T-cell (primary cell): ENCODE measurements at regions of chr3 and their contacts with region 1.

Region 1: DNA sequence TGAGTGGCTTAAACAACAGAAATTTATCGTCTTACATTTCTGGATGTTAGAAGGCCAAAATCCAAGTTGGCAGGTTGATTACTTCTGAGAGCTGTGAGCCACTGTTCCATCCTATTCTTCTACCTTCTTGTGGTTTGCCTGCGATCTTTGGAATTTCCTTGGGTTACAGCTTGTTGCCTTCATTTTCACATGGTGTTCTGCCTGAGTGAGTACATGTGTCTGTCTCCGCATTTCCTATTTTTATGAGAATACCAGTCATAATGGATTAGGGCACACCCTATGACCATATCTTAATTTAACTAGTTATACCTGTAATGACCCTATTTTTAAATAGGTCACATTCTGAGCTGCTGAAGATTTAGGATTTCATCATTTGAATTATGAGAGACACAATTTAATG is 294.3 kb downstream of the CNTN4 start:
- DNase-seq: no peak
- ATAC-seq: no peak
- H3K4me3 ChIP-seq: no peak overlapping the region
- H3K4me3 Mint-ChIP-seq: no peak overlapping the region
- H3K27ac ChIP-seq: no peak overlapping the region
- H3K27ac Mint-ChIP-seq: no peak overlapping the region
- H3K4me1 ChIP-seq: no peaks in the 10 kb centered on the region
- H3K4me1 Mint-ChIP-seq: no peaks in the 10 kb centered on the region
- H3K27me3 ChIP-seq: no peaks in the 10 kb centered on the region
- H3K27me3 Mint-ChIP-seq: peaks cover 0 to 1% of the 10 kb centered on the region in 2 donors

Region 2: GRCh38 chr3:2423143-2423542 is 30.2 kb after region 1 on chr3:
- CTCF ChIA-PET with region 1: no interaction called
- POLR2A ChIA-PET with region 1: interaction called in 1 of 2 experiments, 10 read pairs
- DNase-seq: no peak
- ATAC-seq: no peak
- H3K4me3 ChIP-seq: no peak overlapping the region
- H3K4me3 Mint-ChIP-seq: no peak overlapping the region
- H3K27ac ChIP-seq: no peak overlapping the region
- H3K27ac Mint-ChIP-seq: no peak overlapping the region
- H3K4me1 ChIP-seq: no peaks in the 10 kb centered on the region
- H3K4me1 Mint-ChIP-seq: no peaks in the 10 kb centered on the region
- H3K27me3 ChIP-seq: no peaks in the 10 kb centered on the region
- H3K27me3 Mint-ChIP-seq: no peaks in the 10 kb centered on the region

Region 3: DNA sequence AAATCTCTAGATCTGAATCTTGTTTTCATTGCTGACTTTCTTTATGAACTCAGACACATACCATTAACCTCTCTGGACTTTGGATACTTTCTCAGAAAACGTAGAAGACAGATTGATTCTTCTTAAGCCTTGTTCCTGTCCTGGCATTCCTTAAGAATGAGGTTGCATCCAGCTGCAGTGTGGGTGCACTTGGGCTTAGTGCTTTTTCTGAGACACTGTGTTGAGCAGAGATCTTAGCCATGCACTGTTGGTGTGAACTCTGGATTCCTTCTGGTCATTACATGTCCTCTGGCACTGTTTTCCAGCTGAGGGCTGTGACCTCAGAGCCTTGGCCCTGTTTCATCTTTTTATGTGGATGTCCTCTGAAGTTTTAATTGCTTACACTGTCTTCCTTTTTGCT is 133.9 kb after region 1 on chr3:
- CTCF ChIA-PET with region 1: no interaction called
- POLR2A ChIA-PET with region 1: no interaction called
- DNase-seq: no peak
- ATAC-seq: no peak
- H3K4me3 ChIP-seq: no peak overlapping the region
- H3K4me3 Mint-ChIP-seq: no peak overlapping the region
- H3K27ac ChIP-seq: no peak overlapping the region
- H3K27ac Mint-ChIP-seq: no peak overlapping the region
- H3K4me1 ChIP-seq: no peaks in the 10 kb centered on the region
- H3K4me1 Mint-ChIP-seq: no peaks in the 10 kb centered on the region
- H3K27me3 ChIP-seq: no peaks in the 10 kb centered on the region
- H3K27me3 Mint-ChIP-seq: no peaks in the 10 kb centered on the region